Activated T-helper 1 cell treated with anti-CD3 and anti-CD28 coated beads, Interleukin-12 subunit alpha, Interleukin-12 subunit beta, Interleukin-2, Interleukin-4 antibody, amounts not matched to agents 30 ng/mL and 10 ng/mL and 1 ng/mL, durations not matched to agents 14 hours and 24 hours and 36 hours (primary cell): ENCODE measurements at regions of chr12 and their contacts with region 1.

Region 1: GRCh38 chr12:54324617-54325441 is at the start of gene COPZ1:
- DNase-seq: peak; percentile 91
- H3K4me3 Mint-ChIP-seq: peak within 1 kb of the TSS; percentile 99
- H3K27ac Mint-ChIP-seq: peak within 1 kb of the TSS; percentile 86
- H3K4me1 Mint-ChIP-seq: peaks cover 33% of the 10 kb centered on the region
- H3K27me3 Mint-ChIP-seq: peaks cover 5% of the 10 kb centered on the region
- total RNA-seq, gene COPZ1: 115 and 123 TPM in 2 replicates

Region 2: GRCh38 chr12:53623548-53624385 is 701.1 kb before region 1 on chr12:
- intact Hi-C with region 1: no loop called
- DNase-seq: no peak
- H3K4me3 Mint-ChIP-seq: peak overlapping the region; percentile 99
- H3K27ac Mint-ChIP-seq: no peak overlapping the region
- H3K4me1 Mint-ChIP-seq: peaks cover 36% of the 10 kb centered on the region
- H3K27me3 Mint-ChIP-seq: no peaks in the 10 kb centered on the region

Region 3: GRCh38 chr12:54214553-54215406 is 110.0 kb before region 1 on chr12:
- intact Hi-C with region 1: loop called (anchors 2 kb)
- DNase-seq: peak; percentile 86
- H3K4me3 Mint-ChIP-seq: peak overlapping the region; percentile 72
- H3K27ac Mint-ChIP-seq: no peak overlapping the region
- H3K4me1 Mint-ChIP-seq: peaks cover 19% of the 10 kb centered on the region
- H3K27me3 Mint-ChIP-seq: peaks cover 13% of the 10 kb centered on the region

Region 4: DNA sequence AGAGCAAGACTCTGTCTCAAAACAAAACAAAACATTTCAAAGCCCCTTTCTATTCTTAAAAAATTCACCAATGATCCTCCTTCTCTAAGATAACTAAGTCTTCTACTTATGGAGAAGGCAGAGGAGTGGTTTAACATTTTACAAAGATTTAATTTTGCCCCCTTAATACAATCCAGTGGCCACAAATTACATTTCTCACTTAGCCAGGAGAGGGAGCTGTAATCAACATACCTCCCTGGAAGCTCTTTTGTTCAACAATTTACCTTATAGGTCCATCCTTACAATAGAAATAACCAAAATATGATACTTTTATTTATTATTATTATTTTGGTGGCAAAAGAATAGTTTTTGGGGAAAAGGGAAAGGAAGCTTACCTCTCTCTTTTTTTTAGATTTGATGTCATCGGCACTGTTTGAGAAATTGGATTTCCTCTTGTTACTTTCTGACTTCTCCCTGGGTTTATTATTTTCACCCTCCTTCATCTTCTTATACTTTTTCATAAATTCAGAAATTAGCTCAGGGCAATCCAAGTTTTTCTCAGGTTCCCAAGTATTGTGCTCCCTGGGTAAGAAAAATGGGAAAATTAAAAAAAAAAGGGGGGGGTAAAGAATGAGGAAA is 73.1 kb before region 1 on chr12:
- intact Hi-C with region 1: loop called (anchors 1 kb)
- DNase-seq: no peak
- H3K4me3 Mint-ChIP-seq: no peak overlapping the region
- H3K27ac Mint-ChIP-seq: no peak overlapping the region
- H3K4me1 Mint-ChIP-seq: peaks cover 6% of the 10 kb centered on the region
- H3K27me3 Mint-ChIP-seq: no peaks in the 10 kb centered on the region

Region 5: GRCh38 chr12:54294152-54294952 is 30.5 kb before region 1 on chr12:
- intact Hi-C with region 1: loop called (anchors 1 kb)
- DNase-seq: peak; percentile 46
- H3K4me3 Mint-ChIP-seq: no peak overlapping the region
- H3K27ac Mint-ChIP-seq: no peak overlapping the region
- H3K4me1 Mint-ChIP-seq: peaks cover 4% of the 10 kb centered on the region
- H3K27me3 Mint-ChIP-seq: peaks cover 16% of the 10 kb centered on the region

Region 6: DNA sequence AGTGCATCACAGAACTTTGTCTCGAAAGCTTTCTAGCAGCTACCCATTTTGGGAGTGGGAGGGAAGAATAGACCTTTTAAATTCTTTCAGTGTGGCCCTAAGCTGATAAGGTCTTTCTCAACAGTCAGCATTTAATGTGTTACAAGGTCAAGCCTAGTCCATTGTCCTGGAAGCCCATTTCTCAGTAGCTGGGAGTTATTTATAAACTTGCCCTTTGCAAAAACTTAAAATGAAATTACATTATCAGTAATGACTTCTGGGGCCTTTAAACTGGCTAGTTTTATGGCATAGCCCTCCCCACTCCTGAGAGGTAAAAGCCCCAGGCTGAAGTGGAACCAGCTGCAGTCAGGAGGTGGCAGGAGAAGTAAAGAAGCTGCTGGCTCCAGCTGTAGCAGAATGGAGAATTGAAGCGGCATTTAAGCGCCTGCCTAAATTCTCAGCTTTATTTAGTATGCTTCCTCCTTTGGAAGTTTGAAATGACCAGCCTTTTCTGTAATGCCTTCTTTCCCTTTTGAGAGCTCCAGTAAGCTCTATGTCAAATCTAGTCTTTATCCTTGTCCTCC is 12.5 kb after region 1 on chr12:
- intact Hi-C with region 1: loop called (anchors 1 kb)
- DNase-seq: no peak
- H3K4me3 Mint-ChIP-seq: no peak overlapping the region
- H3K27ac Mint-ChIP-seq: no peak overlapping the region
- H3K4me1 Mint-ChIP-seq: peaks cover 21% of the 10 kb centered on the region
- H3K27me3 Mint-ChIP-seq: no peaks in the 10 kb centered on the region

Region 7: DNA sequence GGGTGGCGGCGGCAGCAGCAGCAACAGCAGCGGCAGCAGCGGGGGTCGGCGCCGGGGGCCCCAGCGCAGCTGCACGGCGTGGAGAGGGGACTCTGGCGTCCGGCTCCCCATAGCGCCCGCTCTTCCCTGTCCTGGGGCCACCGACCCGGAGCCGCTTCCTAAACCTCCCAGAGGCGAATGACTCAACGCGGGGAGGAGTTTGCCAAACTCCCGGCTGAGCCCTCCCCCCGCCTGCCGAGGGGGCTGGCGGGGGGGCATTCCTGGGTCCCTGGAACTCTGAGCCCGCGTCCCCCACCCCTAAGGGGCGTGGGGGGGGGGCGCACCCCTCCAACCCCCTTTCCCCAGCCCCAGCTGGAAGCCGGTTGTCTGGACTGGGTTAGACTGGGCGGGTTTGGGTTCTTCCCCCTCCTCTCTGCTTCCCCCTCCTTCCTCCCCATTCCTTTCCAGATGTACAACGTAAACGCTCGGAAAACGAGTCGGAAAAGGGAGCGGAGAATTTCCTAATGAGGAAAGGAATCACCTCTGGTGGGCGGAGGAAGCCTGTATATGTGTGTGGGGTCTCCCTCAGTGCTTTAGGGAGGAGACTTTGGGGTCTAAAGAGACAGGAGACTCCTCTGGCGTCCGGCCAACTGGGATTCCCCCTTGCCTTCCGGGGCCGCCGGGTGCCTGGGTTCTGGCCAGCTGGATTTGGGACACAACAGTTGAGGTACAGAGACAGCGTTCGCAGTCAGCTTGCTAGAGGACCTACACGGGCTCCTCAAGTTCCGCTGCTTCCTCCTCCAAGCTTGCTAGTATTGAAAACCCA is 94.5 kb after region 1 on chr12 and contains the start of gene ITGA5:
- intact Hi-C with region 1: no loop called
- DNase-seq: no peak
- H3K4me3 Mint-ChIP-seq: peak within 1 kb of the TSS; percentile 80
- H3K27ac Mint-ChIP-seq: peak within 1 kb of the TSS; percentile 86
- H3K4me1 Mint-ChIP-seq: peaks cover 52% of the 10 kb centered on the region
- H3K27me3 Mint-ChIP-seq: peaks cover 16% of the 10 kb centered on the region
- total RNA-seq, gene ITGA5: 31.2 and 31.6 TPM in 2 replicates

Region 8: GRCh38 chr12:54504550-54504949 is 179.7 kb after region 1 on chr12:
- intact Hi-C with region 1: no loop called
- DNase-seq: no peak
- H3K4me3 Mint-ChIP-seq: no peak overlapping the region
- H3K27ac Mint-ChIP-seq: no peak overlapping the region
- H3K4me1 Mint-ChIP-seq: peaks cover 39% of the 10 kb centered on the region
- H3K27me3 Mint-ChIP-seq: no peaks in the 10 kb centered on the region